Activated T-helper 1 cell treated with anti-CD3 and anti-CD28 coated beads, Interleukin-12 subunit alpha, Interleukin-12 subunit beta, Interleukin-2, Interleukin-4 antibody, amounts not matched to agents 30 ng/mL and 10 ng/mL and 1 ng/mL, durations not matched to agents 14 hours and 24 hours and 36 hours (primary cell): ENCODE measurements at regions of chr1 and their contacts with region 1.

Region 1: DNA sequence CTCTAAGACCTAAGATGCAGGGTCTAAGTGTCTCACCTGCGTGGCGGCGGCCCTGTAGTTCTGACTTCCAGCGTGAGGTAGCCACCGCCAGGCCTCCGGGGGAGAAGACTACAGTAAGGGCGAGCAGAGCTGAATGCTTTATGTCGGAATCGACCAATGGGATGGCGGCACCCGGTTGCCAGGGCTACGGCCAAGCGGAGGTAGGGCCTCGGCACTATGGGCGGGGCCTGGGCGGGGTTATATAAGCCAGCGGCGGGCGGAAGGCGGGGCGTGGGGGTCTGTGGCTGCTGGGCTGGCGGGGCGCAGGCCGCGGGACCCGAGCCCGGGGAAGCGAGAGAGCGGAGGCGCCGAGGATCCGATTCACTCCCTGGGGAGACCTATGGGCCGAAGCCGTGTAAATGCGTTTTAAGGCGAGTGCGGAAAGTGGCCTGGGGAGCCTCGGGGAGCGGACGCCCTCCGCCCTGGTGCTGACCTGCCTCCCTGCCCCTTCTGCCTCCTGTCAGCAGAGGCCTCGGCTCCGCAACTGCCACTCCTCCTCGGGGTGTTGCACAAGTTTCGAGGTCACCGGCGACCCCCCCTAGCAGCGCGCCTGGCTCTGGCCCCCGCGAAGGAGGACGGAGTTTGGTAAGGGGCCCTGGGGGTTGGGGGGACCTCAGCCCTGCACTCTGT is at the start of gene AZIN2:
- DNase-seq: peak; percentile 93
- H3K4me3 Mint-ChIP-seq: peak within 1 kb of the TSS; percentile 84
- H3K27ac Mint-ChIP-seq: no peak within 1 kb of the TSS
- H3K4me1 Mint-ChIP-seq: peaks cover 17% of the 10 kb centered on the region
- H3K27me3 Mint-ChIP-seq: peaks cover 36% of the 10 kb centered on the region
- total RNA-seq, gene AZIN2: 1.1 and 1.4 TPM in 2 replicates

Region 2: DNA sequence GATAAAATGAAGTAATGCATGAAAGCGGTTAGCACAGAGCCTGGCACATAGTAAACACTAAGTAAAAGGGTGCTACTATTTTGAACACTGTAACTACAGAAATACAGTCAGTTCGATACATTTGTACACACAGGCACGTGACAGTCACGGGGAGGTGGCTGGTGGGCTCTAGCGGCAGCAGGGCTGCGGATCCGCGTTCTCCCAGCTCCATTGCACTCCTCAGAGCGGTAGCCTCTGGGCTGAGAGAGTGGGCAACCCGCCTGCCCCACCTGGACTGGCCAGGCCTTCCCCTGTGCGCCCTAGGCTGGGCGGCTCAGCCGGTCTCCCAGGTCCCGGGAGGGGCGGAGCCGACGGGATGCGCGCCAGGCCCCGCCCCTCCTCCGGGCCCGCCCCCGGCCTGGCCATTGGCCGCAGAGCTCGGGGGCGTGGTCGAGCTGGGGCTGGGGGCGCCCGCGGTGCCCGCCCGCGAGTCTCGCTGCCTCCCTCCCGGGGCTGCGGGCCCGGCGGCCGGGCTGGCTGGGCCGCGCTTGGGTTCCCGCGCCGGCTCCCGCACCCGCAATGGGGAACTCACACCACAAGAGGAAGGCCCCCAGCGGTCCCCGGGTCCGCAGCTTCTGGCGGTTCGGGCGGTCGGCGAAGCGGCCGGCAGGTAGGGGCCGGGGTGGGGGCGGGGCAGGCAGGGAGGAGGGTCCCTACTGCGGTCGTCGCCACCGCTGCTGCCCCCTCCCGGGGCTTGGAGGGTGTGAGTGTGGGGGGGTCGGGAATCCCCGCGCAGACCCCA is 327.3 kb before region 1 on chr1:
- intact Hi-C with region 1: loop called (anchors 2 kb)
- DNase-seq: peak; percentile 66
- H3K4me3 Mint-ChIP-seq: peak overlapping the region; percentile 80
- H3K27ac Mint-ChIP-seq: peak overlapping the region; percentile 59
- H3K4me1 Mint-ChIP-seq: peaks cover 11% of the 10 kb centered on the region
- H3K27me3 Mint-ChIP-seq: peaks cover 46% of the 10 kb centered on the region

Region 3: GRCh38 chr1:32964461-32965250 is 116.4 kb before region 1 on chr1 and contains the start of gene RNF19B:
- intact Hi-C with region 1: loop called (anchors 1 kb)
- DNase-seq: peak; percentile 94
- H3K4me3 Mint-ChIP-seq: peak within 1 kb of the TSS; percentile 84
- H3K27ac Mint-ChIP-seq: peak within 1 kb of the TSS; percentile 86
- H3K4me1 Mint-ChIP-seq: peaks cover 58% of the 10 kb centered on the region
- H3K27me3 Mint-ChIP-seq: peaks cover 1% of the 10 kb centered on the region
- total RNA-seq, gene RNF19B: 52.1 and 56.5 TPM in 2 replicates

Region 4: GRCh38 chr1:32992489-32993323 is 88.3 kb before region 1 on chr1:
- intact Hi-C with region 1: no loop called
- DNase-seq: peak; percentile 81
- H3K4me3 Mint-ChIP-seq: peak overlapping the region; percentile 31
- H3K27ac Mint-ChIP-seq: peak overlapping the region; percentile 87
- H3K4me1 Mint-ChIP-seq: peaks cover 83% of the 10 kb centered on the region
- H3K27me3 Mint-ChIP-seq: no peaks in the 10 kb centered on the region

Region 5: DNA sequence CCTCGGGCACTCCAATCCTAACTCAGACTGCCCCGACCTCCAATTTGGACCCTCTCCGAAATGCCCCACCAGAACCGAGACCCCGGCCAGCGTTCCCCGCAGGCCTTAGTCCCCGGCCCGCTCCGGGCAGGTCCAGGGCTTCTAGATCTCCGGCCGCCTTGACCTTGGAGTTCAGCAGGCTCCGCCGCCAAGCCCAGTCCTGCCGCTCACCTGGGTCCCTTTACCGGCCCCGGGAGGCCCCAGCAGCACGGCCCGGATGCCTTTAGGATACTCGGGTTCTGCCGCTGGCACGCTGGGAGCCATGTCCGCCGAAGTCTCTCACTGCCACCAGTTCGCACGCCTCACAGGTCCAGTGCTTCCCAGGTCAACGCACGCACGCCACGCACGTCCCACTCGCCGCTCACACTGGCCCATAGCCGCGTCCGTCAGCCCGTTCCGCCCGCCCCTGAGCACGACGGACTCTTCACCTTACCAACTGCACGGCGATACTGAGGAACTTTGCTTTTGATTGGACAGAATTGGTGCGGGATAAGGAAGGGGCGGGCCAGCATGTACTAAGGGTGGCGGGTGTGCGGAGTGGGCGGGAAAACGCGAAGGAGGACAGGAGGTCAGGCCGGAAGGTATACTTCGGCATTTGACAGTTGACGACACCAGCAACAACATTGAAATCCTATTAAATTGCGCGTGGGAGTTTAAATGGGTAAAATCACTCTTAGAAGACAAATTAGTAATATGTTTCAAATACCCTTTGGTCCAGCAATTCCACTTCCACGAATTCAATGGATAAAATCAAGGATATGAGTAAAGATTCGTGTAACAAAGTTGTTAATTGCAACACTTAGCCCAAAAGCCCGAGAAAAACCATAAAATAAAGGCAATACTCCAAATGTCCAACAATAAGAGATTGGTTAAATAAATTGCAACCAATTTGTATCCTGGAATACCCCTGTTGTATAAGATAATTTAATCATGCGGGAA is 44.2 kb before region 1 on chr1 and contains the start of gene AK2:
- intact Hi-C with region 1: loop called (anchors 1 kb)
- DNase-seq: peak; percentile 91
- H3K4me3 Mint-ChIP-seq: peak within 1 kb of the TSS; percentile 91
- H3K27ac Mint-ChIP-seq: peak within 1 kb of the TSS; percentile 90
- H3K4me1 Mint-ChIP-seq: peaks cover 48% of the 10 kb centered on the region
- H3K27me3 Mint-ChIP-seq: no peaks in the 10 kb centered on the region
- total RNA-seq, gene AK2: 387 and 400 TPM in 2 replicates

Region 6: GRCh38 chr1:33065301-33065700 is 15.7 kb before region 1 on chr1:
- intact Hi-C with region 1: no loop called
- DNase-seq: no peak
- H3K4me3 Mint-ChIP-seq: no peak overlapping the region
- H3K27ac Mint-ChIP-seq: no peak overlapping the region
- H3K4me1 Mint-ChIP-seq: no peaks in the 10 kb centered on the region
- H3K27me3 Mint-ChIP-seq: peaks cover 28% of the 10 kb centered on the region

Region 7: GRCh38 chr1:33181921-33182341 is 100.9 kb after region 1 on chr1 and contains the start of gene TRIM62:
- intact Hi-C with region 1: loop called (anchors 2 kb)
- DNase-seq: peak; percentile 69
- H3K4me3 Mint-ChIP-seq: peak within 1 kb of the TSS; percentile 87
- H3K27ac Mint-ChIP-seq: peak within 1 kb of the TSS; percentile 81
- H3K4me1 Mint-ChIP-seq: peaks cover 28% of the 10 kb centered on the region
- H3K27me3 Mint-ChIP-seq: peaks cover 19% of the 10 kb centered on the region
- total RNA-seq, gene TRIM62: 4.1 and 4.5 TPM in 2 replicates